ENCODE measurements at regions of chr18 and their contacts with region 1.

Region 1: DNA sequence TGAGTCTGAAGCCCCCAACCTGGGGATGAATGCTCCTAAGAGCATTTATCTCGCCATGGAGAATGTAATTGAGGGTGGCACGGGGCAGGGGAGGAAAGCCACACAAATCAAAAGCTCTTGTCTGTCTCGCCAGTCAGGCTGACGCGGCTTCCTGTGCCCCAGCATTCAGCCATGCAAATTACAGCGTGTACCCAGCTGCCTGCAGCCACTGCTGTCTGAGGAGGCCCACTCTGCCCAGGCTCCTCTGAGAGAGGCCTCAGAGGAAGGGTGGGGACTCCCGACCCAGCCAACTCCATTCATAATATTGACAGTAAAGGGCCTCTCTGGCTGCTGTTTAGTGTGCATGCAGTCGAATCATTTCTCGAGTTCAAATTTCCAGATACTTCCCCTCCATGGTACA is 22.0 kb downstream of the SMAD7 start:
- DNase-seq: peak; percentile 65
- ATAC-seq: peak; percentile 86
- H3K4me3 Mint-ChIP-seq: peak overlapping the region; percentile 80
- H3K27ac Mint-ChIP-seq: peak overlapping the region; percentile 92
- H3K4me1 Mint-ChIP-seq: peaks cover 97% of the 10 kb centered on the region
- H3K27me3 Mint-ChIP-seq: no peaks in the 10 kb centered on the region
- CTCF ChIP-seq: no peak

Region 2: DNA sequence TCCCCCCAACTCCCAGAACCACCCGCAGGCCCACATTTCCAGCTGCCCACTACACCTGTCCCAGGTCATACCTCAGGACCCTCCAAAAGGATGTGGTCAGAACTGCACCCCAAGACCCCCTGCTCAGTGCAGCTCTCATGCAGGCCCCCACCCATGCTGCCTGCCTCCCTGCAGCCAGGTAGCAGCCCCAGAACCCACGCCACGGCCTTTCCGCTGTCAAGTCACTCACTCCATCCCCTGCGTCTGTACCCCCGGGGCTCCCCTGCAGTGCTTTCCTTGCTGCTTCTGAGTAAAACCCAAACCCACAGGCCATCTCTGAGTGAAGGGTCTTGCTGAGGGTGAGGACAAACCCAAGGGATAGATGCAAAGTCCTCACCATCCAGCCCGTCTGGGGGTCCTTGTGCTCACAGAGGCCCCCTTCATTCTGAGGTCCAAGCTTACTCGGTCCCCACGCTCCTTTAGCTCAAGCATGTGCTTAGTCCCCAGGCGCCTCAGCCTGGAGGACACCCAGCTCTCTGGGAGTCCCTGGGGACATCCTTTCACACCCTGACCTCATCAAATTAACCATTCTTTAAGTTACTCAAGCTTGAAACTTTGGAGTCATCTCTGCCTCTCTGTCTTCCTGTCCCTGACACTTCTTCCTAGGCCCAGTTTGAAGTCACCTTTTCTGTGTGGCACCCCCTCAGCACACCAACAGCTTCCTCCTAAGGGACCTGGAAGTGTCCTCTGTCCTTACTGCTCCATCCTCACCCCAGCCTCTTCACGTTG is 108.1 kb before region 1 on chr18:
- CTCF ChIA-PET with region 1: no interaction called
- POLR2A ChIA-PET with region 1: no interaction called
- intact Hi-C with region 1: loop called (anchors 1 kb)
- DNase-seq: peak; percentile 33
- ATAC-seq: peak; percentile 98
- H3K4me3 Mint-ChIP-seq: peak overlapping the region; percentile 4
- H3K27ac Mint-ChIP-seq: peak overlapping the region; percentile 32
- H3K4me1 Mint-ChIP-seq: peaks cover 18% of the 10 kb centered on the region
- H3K27me3 Mint-ChIP-seq: no peaks in the 10 kb centered on the region
- CTCF ChIP-seq: no peak

Region 3: GRCh38 chr18:48868468-48869466 is 60.0 kb before region 1 on chr18:
- CTCF ChIA-PET with region 1: no interaction called
- POLR2A ChIA-PET with region 1: interaction called, 8 read pairs
- intact Hi-C with region 1: loop called (anchors 2 kb)
- DNase-seq: peak; percentile 44
- ATAC-seq: peak; percentile 95
- H3K4me3 Mint-ChIP-seq: peak overlapping the region; percentile 13
- H3K27ac Mint-ChIP-seq: peak overlapping the region; percentile 85
- H3K4me1 Mint-ChIP-seq: peaks cover 17% of the 10 kb centered on the region
- H3K27me3 Mint-ChIP-seq: no peaks in the 10 kb centered on the region
- CTCF ChIP-seq: no peak

Region 4: DNA sequence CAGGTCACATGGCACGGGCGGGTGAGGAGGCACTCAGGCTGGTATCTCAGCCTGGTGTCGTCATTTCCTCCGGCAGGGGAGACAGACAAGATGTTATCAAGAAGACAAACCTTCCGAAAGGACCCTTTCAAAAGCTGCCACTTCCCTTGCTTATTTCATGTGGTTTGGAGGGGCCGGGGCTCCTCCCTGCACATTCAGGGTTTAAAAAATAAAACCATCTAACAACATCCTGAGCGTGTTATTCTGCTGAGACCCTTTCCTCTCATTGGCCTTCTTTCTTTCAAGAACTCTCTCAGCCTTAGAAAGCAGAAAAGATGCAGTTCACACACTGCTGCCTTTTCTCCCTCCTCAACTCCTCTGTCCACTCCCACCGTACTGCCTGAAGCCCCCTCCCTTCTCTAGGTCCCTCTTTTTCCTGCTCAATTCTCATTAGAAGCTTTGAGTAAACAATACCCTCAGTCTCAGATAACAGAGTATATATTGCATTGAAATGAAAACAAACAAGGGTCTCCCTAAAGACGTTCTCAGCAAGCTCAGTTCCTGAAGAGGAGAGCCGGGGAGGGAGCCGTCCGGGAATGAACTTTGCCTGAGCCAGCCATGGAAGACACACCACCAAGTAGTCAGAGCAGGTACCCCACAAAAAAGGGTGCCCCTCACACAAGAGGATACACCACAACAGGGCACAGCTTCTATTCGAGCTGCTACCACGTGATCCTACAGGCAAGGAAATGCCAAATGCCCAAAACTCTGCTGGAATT is 12.2 kb after region 1 on chr18:
- CTCF ChIA-PET with region 1: interaction called, 3 read pairs
- POLR2A ChIA-PET with region 1: interaction called, 7 read pairs
- intact Hi-C with region 1: loop called (anchors 1 kb)
- DNase-seq: peak; percentile 53
- ATAC-seq: peak; percentile 84
- H3K4me3 Mint-ChIP-seq: peak overlapping the region; percentile 76
- H3K27ac Mint-ChIP-seq: peak overlapping the region; percentile 95
- H3K4me1 Mint-ChIP-seq: peaks cover 61% of the 10 kb centered on the region
- H3K27me3 Mint-ChIP-seq: no peaks in the 10 kb centered on the region
- CTCF ChIP-seq: no peak

Region 5: GRCh38 chr18:48992699-48993555 is 64.1 kb after region 1 on chr18:
- CTCF ChIA-PET with region 1: no interaction called
- POLR2A ChIA-PET with region 1: no interaction called
- intact Hi-C with region 1: loop called (anchors 1 kb)
- DNase-seq: peak; percentile 45
- ATAC-seq: peak; percentile 98
- H3K4me3 Mint-ChIP-seq: peak overlapping the region; percentile 42
- H3K27ac Mint-ChIP-seq: peak overlapping the region; percentile 70
- H3K4me1 Mint-ChIP-seq: peaks cover 20% of the 10 kb centered on the region
- H3K27me3 Mint-ChIP-seq: no peaks in the 10 kb centered on the region
- CTCF ChIP-seq: no peak

Region 6: GRCh38 chr18:50287441-50288347 is 1358.9 kb after region 1 on chr18 and contains the start of gene CXXC1:
- CTCF ChIA-PET with region 1: no interaction called
- POLR2A ChIA-PET with region 1: no interaction called
- intact Hi-C with region 1: loop called (anchors 2 kb)
- DNase-seq: peak; percentile 88
- ATAC-seq: peak; percentile 87
- H3K4me3 Mint-ChIP-seq: peak within 1 kb of the TSS; percentile 99
- H3K27ac Mint-ChIP-seq: peak within 1 kb of the TSS; percentile 95
- H3K4me1 Mint-ChIP-seq: peaks cover 23% of the 10 kb centered on the region
- H3K27me3 Mint-ChIP-seq: no peaks in the 10 kb centered on the region
- CTCF ChIP-seq: no peak
- total RNA-seq, gene CXXC1: 126 and 134 TPM in 2 replicates

Measured in activated B cell treated with CpG ODN at 0.5 μM for 24 hours (primary cell).